Cardiac septum (tissue), 1 donor: ENCODE measurements at regions of chr14 and their contacts with region 1.

Region 1: GRCh38 chr14:50860478-50861086 is 11.3 kb upstream of the ABHD12B start:
- DNase-seq: peak; percentile 87

Region 2: DNA sequence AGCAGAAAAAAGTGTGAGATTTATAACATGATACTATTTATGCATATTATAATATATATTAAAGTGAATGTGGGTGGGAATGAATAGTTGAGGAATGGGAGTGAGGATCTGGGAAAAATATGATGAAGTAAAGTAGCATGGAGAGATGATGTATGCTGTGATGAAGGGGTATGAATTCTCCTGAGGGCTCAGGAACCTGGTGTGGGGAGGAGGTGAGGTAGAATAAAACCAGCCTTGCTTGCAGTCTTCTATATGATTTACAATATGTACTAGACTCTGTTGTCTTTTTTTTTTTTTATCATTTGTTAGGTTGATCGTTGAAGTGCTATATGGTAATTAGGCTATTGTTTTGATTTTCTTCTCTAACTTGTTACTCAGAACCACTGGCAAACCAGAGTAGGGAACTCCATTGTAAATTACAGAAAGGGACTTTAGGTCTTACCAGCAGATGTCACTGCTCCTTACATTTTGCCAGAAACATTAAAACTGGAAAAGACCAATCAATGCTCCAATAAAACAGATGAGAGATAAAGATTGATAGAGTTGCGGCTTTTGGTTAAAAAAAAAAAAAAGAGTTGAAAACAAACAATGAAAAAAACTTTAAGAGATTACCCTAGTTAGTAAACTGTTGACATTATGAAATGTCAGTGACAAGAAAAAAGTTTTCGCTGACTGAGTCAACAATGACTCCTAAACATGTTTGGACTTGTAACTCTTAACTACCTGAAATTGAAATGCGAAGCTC is 260.7 kb before region 1 on chr14:
- intact Hi-C with region 1: loop called (anchors 5 kb)
- DNase-seq: no peak

Region 3: GRCh38 chr14:50785457-50786063 is 75.0 kb before region 1 on chr14:
- intact Hi-C with region 1: loop called (anchors 5 kb)
- DNase-seq: no peak

Region 4: DNA sequence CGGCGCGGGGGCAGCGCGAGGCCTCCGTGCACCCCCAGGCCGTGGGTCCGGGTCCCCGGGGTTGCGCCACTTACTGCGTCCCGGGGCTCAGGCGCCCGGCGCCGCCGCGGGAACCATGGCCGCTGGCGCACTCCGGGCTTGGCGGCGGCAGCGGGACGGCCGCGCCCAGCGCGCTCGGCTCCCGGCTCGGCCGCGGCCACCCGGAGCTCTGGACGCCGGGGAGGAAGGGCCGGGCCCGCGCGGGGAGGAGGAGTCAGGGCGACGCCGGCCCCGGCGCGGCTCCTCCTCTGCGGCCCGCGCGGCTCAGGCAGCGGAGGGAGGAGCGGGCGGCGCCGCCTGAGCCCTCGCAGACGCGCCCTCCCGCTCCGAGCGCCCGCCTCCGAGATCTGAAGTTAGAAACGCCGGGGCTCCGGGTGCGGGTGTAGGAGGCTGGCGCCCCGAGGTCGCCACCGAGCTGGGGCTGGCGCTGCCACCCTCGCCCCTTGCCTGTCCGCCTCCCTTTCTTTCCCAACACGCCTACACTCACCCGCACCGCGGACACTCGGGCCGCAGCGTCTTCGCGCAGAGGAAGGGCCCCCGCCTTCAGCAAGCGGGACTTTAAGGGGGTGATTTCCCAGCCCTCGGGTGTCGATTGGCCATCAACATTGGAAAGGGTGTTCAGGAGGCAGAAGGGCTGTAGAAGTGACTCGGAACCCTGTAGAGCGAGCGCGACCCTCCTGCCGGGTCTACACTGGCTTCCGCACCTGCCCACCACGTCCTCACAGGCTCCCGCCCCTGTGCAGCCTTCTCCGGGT is 29.5 kb before region 1 on chr14 and contains the start of gene NIN:
- intact Hi-C with region 1: loop called (anchors 1 kb)
- DNase-seq: peak; percentile 89
- total RNA-seq, gene NIN: 59.2 TPM